Thyroid gland (tissue), 4 donors: ENCODE measurements at regions of chr4 and their contacts with region 1.

Region 1: GRCh38 chr4:25299480-25300188 is 12.9 kb upstream of the ZCCHC4 start:
- DNase-seq: peak; percentile 82 to 85
- H3K4me3 ChIP-seq: no peak overlapping the region
- H3K27ac ChIP-seq: peak overlapping the region; percentile 79 to 96 (median 89)
- H3K4me1 ChIP-seq: peaks cover 10% of the 10 kb centered on the region in 2 donors
- H3K27me3 ChIP-seq: no peaks in the 10 kb centered on the region
- CTCF ChIP-seq: peak in 3 of 6 experiments; percentile 37 to 44 (median 39)
- POLR2A ChIP-seq: peak in 1 of 2 donors; percentile 44

Region 2: DNA sequence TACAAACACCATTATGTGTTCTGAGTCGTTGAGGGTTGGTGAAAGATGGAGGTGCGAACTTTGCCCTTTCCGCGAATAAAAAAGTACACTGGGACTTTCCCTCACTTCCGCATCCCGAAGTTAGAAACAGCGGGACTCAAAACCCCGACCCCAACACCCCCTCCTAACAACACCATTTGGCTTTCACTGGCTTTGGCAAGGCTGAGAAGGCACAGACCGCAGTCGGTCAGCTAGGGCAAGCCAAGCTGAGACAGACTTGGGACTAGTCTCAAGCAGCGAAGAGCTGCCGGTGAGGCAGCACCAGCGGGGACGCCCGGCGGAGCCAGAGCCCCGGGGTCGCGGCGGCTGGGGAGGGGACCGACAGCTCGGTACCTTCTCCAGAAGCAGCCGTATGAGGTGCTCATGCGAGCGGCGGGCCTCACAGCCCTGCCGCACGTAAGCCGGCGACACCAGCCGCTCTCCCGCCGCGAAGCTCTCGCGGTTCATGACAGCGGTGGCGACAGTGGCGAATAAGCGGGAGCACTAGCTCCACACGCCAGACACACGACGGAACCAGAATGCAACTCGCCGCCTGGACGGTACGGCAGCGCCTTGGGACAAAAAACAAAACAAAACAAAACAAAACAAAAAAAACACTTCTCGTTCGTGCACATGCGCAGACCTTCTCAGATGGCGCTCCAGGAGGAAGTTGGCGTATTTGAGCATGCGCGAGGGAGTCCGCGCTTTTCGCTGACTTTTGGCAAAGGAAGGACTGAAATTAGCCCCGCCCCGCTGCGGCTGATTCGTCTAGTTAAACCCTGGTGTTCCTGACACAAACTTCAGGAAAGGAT is 139.5 kb before region 1 on chr4 and contains the start of gene SEPSECS:
- intact Hi-C with region 1: loop called (anchors 10 kb)
- DNase-seq: peak; percentile 99 to 100
- H3K4me3 ChIP-seq: peak within 1 kb of the TSS; percentile 79 to 99 (median 88)
- H3K27ac ChIP-seq: peak within 1 kb of the TSS; percentile 86 to 93 (median 90)
- H3K4me1 ChIP-seq: peaks cover 13 to 22% of the 10 kb centered on the region in 2 donors
- H3K27me3 ChIP-seq: no peaks in the 10 kb centered on the region
- CTCF ChIP-seq: peak in 2 of 6 experiments; percentile 22 to 27
- POLR2A ChIP-seq: peak in 1 of 2 donors; percentile 93
- total RNA-seq, gene SEPSECS: 9.2 to 22.3 (median 13.5) TPM

Region 3: DNA sequence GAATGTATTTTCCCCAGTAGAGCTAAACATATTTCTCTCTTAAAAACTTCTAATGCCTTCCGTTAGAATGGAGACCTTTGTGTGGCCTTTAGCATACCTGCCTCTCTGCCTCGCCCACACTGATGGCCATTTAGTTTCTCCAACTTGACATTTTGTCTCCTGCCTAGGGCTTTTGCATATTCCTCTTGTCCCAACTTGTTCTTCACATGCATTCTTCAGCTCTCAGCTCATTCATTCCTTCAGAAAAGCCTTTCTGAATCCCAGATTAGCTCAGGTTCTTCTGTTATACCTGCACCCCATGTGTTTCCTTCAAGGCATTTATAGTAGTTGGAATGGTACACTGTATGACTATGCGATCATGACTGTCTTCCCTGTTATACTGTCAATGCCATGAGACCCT is 96.2 kb after region 1 on chr4:
- intact Hi-C with region 1: no loop called
- DNase-seq: no peak
- H3K4me3 ChIP-seq: no peak overlapping the region
- H3K27ac ChIP-seq: no peak overlapping the region
- H3K4me1 ChIP-seq: no peaks in the 10 kb centered on the region
- H3K27me3 ChIP-seq: no peaks in the 10 kb centered on the region
- CTCF ChIP-seq: no peak
- POLR2A ChIP-seq: no peak